H1 (cell line): ENCODE measurements at regions of chr22 and their contacts with region 1.

Region 1: GRCh38 chr22:37933711-37934376 is 19.6 kb downstream of the C22orf23 start:
- DNase-seq: peak; percentile 73 to 98
- H3K4me3 ChIP-seq: no peak overlapping the region
- H3K27ac ChIP-seq: no peak overlapping the region
- H3K4me1 ChIP-seq: peaks cover 0 to 5% (median 3%) of the 10 kb centered on the region in 4 experiments; a peak in 5 of 7 replicates
- H3K27me3 ChIP-seq: no peaks in the 10 kb centered on the region
- CTCF ChIP-seq: peak; percentile 99
- EP300 ChIP-seq: no peak
- POLR2A ChIP-seq: no peak
- RAD21 ChIP-seq: peak; percentile 62 to 74

Region 2: GRCh38 chr22:37832022-37832857 is 101.6 kb before region 1 on chr22:
- CTCF ChIA-PET with region 1: no interaction called
- POLR2A ChIA-PET with region 1: no interaction called
- DNase-seq: no peak
- H3K4me3 ChIP-seq: no peak overlapping the region
- H3K27ac ChIP-seq: no peak overlapping the region
- H3K4me1 ChIP-seq: no peaks in the 10 kb centered on the region
- H3K27me3 ChIP-seq: no peaks in the 10 kb centered on the region
- CTCF ChIP-seq: no peak
- EP300 ChIP-seq: no peak
- POLR2A ChIP-seq: no peak
- RAD21 ChIP-seq: no peak

Region 3: GRCh38 chr22:37896181-37896592 is 37.7 kb before region 1 on chr22:
- CTCF ChIA-PET with region 1: interaction called, 158 read pairs
- POLR2A ChIA-PET with region 1: interaction called, 10 read pairs
- DNase-seq: no peak
- H3K4me3 ChIP-seq: no peak overlapping the region
- H3K27ac ChIP-seq: no peak overlapping the region
- H3K4me1 ChIP-seq: peaks cover 16 to 24% (median 20%) of the 10 kb centered on the region in 4 experiments
- H3K27me3 ChIP-seq: no peaks in the 10 kb centered on the region
- CTCF ChIP-seq: no peak
- EP300 ChIP-seq: no peak
- POLR2A ChIP-seq: no peak
- RAD21 ChIP-seq: no peak

Region 4: GRCh38 chr22:37922191-37922590 is 11.7 kb before region 1 on chr22:
- CTCF ChIA-PET with region 1: interaction called, 13 read pairs
- POLR2A ChIA-PET with region 1: interaction called, 11 read pairs
- DNase-seq: no peak
- H3K4me3 ChIP-seq: no peak overlapping the region
- H3K27ac ChIP-seq: no peak overlapping the region
- H3K4me1 ChIP-seq: no peaks in the 10 kb centered on the region
- H3K27me3 ChIP-seq: no peaks in the 10 kb centered on the region
- CTCF ChIP-seq: peak in 1 of 3 experiments; percentile 29; a peak in 1 of 4 replicates
- EP300 ChIP-seq: no peak
- POLR2A ChIP-seq: no peak
- RAD21 ChIP-seq: no peak; a peak in 1 of 4 replicates

Region 5: DNA sequence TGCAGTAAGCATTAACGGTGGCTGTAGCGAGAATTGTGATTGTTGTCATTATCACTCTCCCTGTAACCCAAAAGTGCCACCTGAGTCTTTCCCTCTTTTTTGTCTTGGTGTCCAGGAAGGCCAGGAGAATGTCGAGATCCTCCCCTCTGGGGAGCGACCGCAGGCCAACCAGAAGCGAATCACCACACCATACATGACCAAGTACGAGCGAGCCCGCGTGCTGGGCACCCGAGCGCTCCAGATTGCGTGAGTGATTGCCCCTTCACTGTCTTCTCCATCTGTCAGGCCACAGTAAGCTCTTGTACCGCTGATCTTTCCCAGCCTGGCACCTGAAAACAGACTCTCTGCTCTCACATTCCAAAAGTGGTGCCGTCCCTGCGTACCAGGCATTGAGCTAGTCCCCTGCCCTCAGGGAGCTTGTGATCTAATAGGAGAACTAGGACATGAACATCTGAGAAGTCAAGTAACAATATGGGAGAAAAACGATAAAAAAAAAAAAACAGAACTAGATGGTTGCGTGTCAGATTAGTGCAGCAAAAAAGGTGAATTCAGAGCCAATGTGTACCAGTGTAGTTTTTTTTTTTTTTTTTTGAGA is 25.5 kb after region 1 on chr22:
- CTCF ChIA-PET with region 1: interaction called, 23 read pairs
- POLR2A ChIA-PET with region 1: no interaction called
- DNase-seq: no peak
- H3K4me3 ChIP-seq: no peak overlapping the region
- H3K27ac ChIP-seq: no peak overlapping the region
- H3K4me1 ChIP-seq: no peaks in the 10 kb centered on the region
- H3K27me3 ChIP-seq: no peaks in the 10 kb centered on the region
- CTCF ChIP-seq: no peak
- EP300 ChIP-seq: no peak
- POLR2A ChIP-seq: no peak
- RAD21 ChIP-seq: no peak

Region 6: DNA sequence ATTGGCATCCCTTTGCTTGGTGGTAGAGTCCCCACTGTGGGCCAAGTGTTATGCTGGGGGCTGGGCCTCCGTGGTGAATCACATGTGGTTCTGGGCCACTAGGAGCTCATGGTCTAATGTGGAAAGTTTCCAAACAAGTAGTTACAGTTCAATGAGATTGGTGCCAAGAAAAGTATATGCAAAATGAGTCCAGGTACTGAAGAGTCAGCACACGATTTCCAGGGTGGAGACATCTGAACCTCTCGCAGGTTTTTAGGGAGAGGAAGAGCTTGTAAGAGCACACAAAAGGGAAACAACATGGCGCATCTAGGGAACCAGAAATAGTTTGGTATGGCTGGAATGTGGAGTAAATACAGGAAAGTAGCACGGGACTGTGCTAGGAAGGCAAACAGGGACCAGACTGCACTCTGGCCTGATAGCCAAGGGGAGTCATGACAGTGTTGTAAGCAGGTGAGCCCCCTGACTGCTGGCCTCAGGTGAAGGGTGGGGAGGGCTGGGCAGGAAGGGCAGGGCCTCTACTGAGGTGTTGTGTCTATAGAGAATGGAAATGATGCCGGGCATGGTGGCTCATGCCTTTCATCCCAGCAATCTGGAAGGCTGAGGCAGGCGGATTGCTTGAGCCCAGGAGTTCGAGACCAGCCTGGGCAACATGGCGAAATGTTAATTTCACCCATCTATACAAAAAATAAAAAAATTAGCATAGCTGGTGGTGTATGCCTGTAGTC is 32.3 kb after region 1 on chr22:
- CTCF ChIA-PET with region 1: interaction called, 23 read pairs
- POLR2A ChIA-PET with region 1: interaction called, 3 read pairs
- DNase-seq: no peak
- H3K4me3 ChIP-seq: no peak overlapping the region
- H3K27ac ChIP-seq: no peak overlapping the region
- H3K4me1 ChIP-seq: peaks cover 0 to 5% (median 3%) of the 10 kb centered on the region in 4 experiments; a peak in 4 of 7 replicates
- H3K27me3 ChIP-seq: no peaks in the 10 kb centered on the region
- CTCF ChIP-seq: no peak
- EP300 ChIP-seq: no peak
- POLR2A ChIP-seq: no peak
- RAD21 ChIP-seq: no peak

Region 7: GRCh38 chr22:37999956-38000272 is 66.1 kb after region 1 on chr22:
- CTCF ChIA-PET with region 1: no interaction called
- POLR2A ChIA-PET with region 1: no interaction called
- DNase-seq: no peak
- H3K4me3 ChIP-seq: no peak overlapping the region
- H3K27ac ChIP-seq: no peak overlapping the region
- H3K4me1 ChIP-seq: peaks cover 0 to 23% (median 8%) of the 10 kb centered on the region in 4 experiments; a peak in 5 of 7 replicates
- H3K27me3 ChIP-seq: no peaks in the 10 kb centered on the region; a peak in 1 of 7 replicates
- CTCF ChIP-seq: no peak
- EP300 ChIP-seq: no peak
- POLR2A ChIP-seq: no peak
- RAD21 ChIP-seq: no peak